K562 (cell line): ENCODE measurements at regions of chr2 and their contacts with region 1.

Region 1: DNA sequence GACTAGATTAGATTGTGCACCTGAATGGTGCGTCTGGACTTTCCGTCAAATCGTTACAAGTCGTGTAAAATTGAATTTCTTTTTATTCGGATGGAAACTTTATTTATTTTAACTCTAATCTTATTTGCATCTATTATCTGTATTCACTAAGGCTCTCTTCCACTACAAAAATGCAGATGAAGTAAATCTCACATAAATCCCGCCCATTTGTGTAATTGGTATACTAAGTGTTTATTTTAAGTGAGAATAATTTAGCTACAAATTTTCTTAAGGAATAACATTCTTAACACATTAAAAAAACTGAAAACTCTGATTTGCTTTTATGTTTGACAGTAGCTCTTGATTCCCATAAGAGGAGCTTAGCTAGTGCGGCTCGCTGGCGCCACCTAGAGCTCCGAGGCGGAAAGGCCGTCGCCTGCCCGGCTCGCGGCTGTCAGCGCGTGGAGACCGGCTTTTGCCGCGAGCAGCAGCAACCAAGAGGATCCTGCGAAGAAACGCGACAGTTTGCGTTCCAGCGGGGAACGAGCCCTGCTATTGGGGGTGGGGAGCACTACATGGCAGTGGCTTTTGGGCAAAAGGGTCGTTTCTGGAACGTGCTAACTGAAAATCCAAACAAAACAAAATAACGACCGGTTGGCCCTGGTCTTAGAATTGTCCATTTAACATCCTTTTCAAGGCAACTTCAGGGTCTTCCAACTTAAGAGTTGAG is 6.7 kb downstream of the SP9 start:
- DNase-seq: peak; percentile 81 to 88 (median 84)
- ATAC-seq: peak; percentile 79
- H3K4me3 ChIP-seq: no peak overlapping the region
- H3K27ac ChIP-seq: no peak overlapping the region
- H3K4me1 ChIP-seq: peaks cover 5 to 44% of the 10 kb centered on the region in 2 experiments; a peak in 3 of 5 replicates
- H3K27me3 ChIP-seq: peaks cover 0 to 18% of the 10 kb centered on the region in 2 experiments; a peak in 3 of 5 replicates
- CTCF ChIP-seq: peak; percentile 96 to 99 (median 97)
- EP300 ChIP-seq: no peak
- POLR2A ChIP-seq: no peak
- RAD21 ChIP-seq: peak; percentile 98 to 99

Region 2: GRCh38 chr2:173027181-173028128 is 1314.0 kb before region 1 on chr2:
- CTCF ChIA-PET with region 1: interaction called, 4 read pairs
- POLR2A ChIA-PET with region 1: no interaction called
- in situ Hi-C with region 1: no loop called
- intact Hi-C with region 1: loop called (anchors 10 kb)
- DNase-seq: peak; percentile 76 to 91 (median 82)
- ATAC-seq: peak; percentile 90
- H3K4me3 ChIP-seq: no peak overlapping the region
- H3K27ac ChIP-seq: no peak overlapping the region
- H3K4me1 ChIP-seq: no peaks in the 10 kb centered on the region
- H3K27me3 ChIP-seq: peaks cover 39 to 42% of the 10 kb centered on the region in 2 experiments
- CTCF ChIP-seq: peak; percentile 83 to 97 (median 95)
- EP300 ChIP-seq: no peak; the same call in 1 of the 2 replicates
- POLR2A ChIP-seq: no peak
- RAD21 ChIP-seq: peak; percentile 95 to 97

Region 3: DNA sequence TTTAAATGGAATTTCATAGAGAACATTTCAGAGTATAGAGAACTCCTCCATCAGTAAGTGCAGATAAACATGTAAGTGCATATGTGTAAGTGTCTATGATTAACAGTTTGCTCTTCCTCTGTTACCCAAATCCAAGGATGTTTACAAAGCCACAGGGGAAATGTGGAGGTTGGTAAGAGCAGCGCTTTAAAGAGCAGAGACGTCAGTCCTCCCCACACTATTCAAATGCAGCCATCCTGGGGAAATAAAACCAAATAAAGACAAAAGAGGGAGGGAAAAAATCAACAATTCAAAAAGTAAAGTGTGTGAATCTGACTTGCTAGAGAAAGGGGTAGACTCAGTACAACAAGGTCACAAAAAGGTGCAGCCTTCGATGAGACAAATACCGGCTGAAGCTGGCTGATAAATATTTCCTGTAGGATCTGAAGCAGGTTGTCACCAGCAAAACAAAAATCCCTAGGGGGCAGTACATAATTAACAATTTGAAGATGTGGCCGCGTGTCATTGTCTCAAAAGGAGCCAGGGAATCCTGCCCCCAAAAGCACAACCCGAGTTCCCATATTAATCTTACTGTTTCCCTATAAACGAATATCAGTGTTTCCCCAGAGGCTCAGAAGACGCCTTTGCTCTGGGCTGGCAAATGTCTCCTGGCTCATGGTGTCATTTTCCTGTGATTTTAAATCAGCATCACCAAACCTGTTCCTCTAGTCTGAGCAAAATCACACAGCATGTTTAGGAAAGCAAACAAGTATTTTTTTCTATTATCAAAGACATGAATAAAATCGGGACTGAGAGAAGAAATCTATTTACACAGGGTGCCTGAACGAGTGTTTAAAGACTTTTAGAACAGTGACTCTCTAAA is 770.2 kb before region 1 on chr2:
- CTCF ChIA-PET with region 1: interaction called, 3 read pairs
- POLR2A ChIA-PET with region 1: no interaction called
- in situ Hi-C with region 1: loop called (anchors 10 kb)
- intact Hi-C with region 1: loop called (anchors 2 kb)
- DNase-seq: peak in 2 of 4 experiments; percentile 34 to 36
- ATAC-seq: peak; percentile 76
- H3K4me3 ChIP-seq: no peak overlapping the region
- H3K27ac ChIP-seq: no peak overlapping the region
- H3K4me1 ChIP-seq: no peaks in the 10 kb centered on the region
- H3K27me3 ChIP-seq: 0 out of 5 replicates have a peak, but pooled peaks cover 0 to under 1% of the 10 kb centered on the region in 2 experiments
- CTCF ChIP-seq: peak; percentile 36 to 64 (median 40); a peak in 5 of 6 replicates
- EP300 ChIP-seq: no peak
- POLR2A ChIP-seq: no peak
- RAD21 ChIP-seq: peak; percentile 50 to 64

Region 4: DNA sequence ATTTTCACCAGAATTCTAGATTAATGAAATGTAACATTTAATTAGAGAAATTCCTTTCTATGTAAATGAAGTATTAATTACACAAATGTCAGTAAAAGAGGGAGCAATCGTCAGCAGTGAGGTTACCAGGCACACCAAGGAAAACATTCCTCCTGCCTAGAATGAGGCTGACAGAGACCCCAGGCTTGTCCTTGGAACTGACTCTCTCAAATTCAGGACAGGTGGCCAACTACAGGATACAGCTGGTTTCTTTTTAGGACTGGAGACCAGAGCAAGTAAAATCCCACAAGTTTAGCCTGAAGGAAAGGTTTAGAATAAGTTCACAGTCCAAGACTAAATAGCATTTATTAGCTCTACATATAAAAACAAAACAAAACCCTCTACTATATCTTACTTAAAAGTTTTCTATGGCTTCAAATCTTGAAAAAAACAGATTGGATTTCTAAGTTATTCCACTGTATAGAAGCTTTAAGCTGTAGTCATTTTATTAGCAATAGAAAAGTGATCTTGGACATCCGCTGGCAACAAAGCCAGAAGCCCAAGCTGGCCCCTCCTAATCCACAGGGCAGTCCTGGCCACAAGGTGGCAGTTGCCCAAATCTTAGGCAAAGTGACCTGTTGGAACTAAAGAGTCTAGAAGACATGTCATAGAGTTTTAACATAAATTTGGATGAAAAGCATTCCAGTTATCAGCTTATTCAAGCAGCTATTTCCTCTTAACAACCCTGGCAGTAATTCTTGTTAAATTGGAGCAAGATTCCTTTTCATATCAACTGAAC is 457.2 kb before region 1 on chr2:
- CTCF ChIA-PET with region 1: no interaction called
- POLR2A ChIA-PET with region 1: no interaction called
- in situ Hi-C with region 1: no loop called
- intact Hi-C with region 1: loop called (anchors 5 kb)
- DNase-seq: peak; percentile 51 to 74 (median 62)
- ATAC-seq: peak; percentile 97
- H3K4me3 ChIP-seq: no peak overlapping the region
- H3K27ac ChIP-seq: no peak overlapping the region
- H3K4me1 ChIP-seq: no peaks in the 10 kb centered on the region
- H3K27me3 ChIP-seq: peaks cover 13 to 27% of the 10 kb centered on the region in 2 experiments; a peak in 4 of 5 replicates
- CTCF ChIP-seq: peak; percentile 77 to 85 (median 83)
- EP300 ChIP-seq: no peak
- POLR2A ChIP-seq: no peak
- RAD21 ChIP-seq: peak; percentile 56 to 78

Region 5: DNA sequence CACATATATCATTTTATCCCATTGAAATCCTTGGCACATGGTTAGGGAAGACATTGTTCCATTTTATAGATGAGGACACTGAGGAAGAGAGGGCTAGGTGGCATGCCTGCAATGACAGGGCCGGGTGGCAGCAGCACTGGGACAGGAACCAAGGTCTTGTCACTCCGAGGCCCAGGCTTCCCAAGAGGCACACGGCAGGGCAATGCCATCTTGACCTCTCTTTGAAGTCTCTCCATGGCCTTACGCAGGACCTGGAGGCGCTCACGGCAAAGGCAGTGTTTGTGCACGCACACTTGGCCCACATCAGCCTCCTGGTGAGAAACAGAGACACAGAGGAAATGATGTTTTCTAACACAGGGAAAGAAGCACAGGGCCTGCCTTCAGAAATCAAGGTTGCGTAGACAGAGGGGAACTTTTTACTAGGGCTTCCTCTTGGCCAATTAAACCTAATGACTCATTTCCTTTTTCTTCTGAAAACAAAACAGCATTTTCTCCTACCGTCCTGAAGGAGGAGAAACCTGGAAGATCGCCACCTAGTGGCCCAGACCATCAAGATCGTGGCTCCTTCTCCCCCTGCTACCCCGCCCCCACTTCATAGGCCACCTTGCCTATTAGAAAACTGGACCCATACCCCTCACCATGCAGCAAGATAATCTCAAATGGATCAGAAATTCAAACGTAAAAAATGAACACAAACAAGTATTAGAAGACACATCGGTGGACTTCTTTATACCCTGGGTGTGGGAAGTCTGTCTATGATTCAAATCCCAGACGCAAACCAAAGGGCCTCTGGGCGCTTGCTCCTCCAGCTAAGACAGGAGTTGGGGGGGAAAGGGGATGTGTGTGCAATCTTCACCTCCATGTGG is 301.7 kb before region 1 on chr2:
- CTCF ChIA-PET with region 1: no interaction called
- POLR2A ChIA-PET with region 1: no interaction called
- in situ Hi-C with region 1: loop called (anchors 10 kb)
- intact Hi-C with region 1: no loop called
- DNase-seq: peak; percentile 88 to 95 (median 89)
- ATAC-seq: peak; percentile 93
- H3K4me3 ChIP-seq: no peak overlapping the region
- H3K27ac ChIP-seq: peak overlapping the region; percentile 76
- H3K4me1 ChIP-seq: peaks cover 3 to 10% of the 10 kb centered on the region in 2 experiments; a peak in 4 of 5 replicates
- H3K27me3 ChIP-seq: no peaks in the 10 kb centered on the region; a peak in 2 of 5 replicates
- CTCF ChIP-seq: peak; percentile 96 to 97 (median 97)
- EP300 ChIP-seq: peak; percentile 63
- POLR2A ChIP-seq: no peak
- RAD21 ChIP-seq: peak; percentile 79 to 84

Region 6: GRCh38 chr2:174138161-174138560 is 203.3 kb before region 1 on chr2:
- CTCF ChIA-PET with region 1: no interaction called
- POLR2A ChIA-PET with region 1: interaction called, 3 read pairs
- in situ Hi-C with region 1: no loop called
- intact Hi-C with region 1: loop called (anchors 5 kb)
- DNase-seq: peak in 3 of 4 experiments; percentile 24 to 41 (median 41)
- ATAC-seq: peak; percentile 82
- H3K4me3 ChIP-seq: no peak overlapping the region
- H3K27ac ChIP-seq: no peak overlapping the region
- H3K4me1 ChIP-seq: no peaks in the 10 kb centered on the region
- H3K27me3 ChIP-seq: no peaks in the 10 kb centered on the region
- CTCF ChIP-seq: peak; percentile 38 to 52 (median 42); a peak in 5 of 6 replicates
- EP300 ChIP-seq: no peak
- POLR2A ChIP-seq: no peak
- RAD21 ChIP-seq: peak in 1 of 2 experiments; percentile 54; a peak in 2 of 4 replicates

Region 7: GRCh38 chr2:174148833-174149232 is 192.6 kb before region 1 on chr2:
- CTCF ChIA-PET with region 1: no interaction called
- POLR2A ChIA-PET with region 1: no interaction called
- in situ Hi-C with region 1: no loop called
- intact Hi-C with region 1: no loop called
- DNase-seq: no peak
- ATAC-seq: no peak
- H3K4me3 ChIP-seq: no peak overlapping the region
- H3K27ac ChIP-seq: no peak overlapping the region
- H3K4me1 ChIP-seq: peaks cover 2 to 7% of the 10 kb centered on the region in 2 experiments; a peak in 4 of 5 replicates
- H3K27me3 ChIP-seq: no peaks in the 10 kb centered on the region
- CTCF ChIP-seq: no peak
- EP300 ChIP-seq: no peak
- POLR2A ChIP-seq: no peak
- RAD21 ChIP-seq: no peak

Region 8: DNA sequence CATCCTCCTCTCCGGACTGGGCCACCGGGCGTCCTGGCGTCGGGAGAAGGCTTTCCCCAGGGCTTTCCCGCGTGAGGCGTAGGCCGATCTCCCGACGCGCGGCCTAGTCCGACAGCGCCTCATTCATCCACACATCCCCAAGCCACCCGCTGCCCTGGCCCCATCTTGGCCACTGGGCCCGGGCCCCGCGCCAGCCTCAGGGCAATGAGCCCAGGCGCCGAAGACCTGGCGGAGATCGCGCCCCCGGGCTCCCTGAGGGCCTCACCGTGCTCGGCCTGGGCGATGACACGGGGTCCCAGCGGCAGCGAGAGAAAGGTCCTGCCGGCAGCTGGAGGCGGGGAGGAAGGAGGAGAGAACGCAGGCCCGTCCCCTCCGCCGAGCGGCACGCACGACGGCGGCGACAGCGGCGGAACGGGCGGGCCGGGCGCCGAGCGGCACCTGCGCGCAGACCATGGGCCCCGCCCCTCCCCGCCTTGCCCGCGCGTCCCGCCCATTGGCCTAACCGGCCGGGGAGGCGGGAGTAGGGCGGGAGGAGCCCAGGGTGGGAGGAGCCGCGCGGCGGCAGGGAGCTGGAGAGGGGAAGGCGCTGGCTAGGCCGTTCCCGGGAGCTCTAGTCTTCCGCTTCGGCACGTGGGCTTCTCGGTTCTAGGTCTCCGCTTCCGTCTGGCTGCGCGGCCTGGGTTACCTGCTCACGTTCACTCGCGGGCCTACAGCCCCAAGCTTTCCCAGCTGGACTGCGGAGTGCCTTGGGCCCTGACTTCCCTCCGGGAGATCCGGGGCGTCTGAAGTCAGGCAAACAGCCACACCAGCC is 93.0 kb before region 1 on chr2 and contains the start of gene OLA1:
- CTCF ChIA-PET with region 1: no interaction called
- POLR2A ChIA-PET with region 1: no interaction called
- in situ Hi-C with region 1: no loop called
- intact Hi-C with region 1: loop called (anchors 5 kb)
- DNase-seq: peak; percentile 98 to 99 (median 99)
- ATAC-seq: peak; percentile 96
- H3K4me3 ChIP-seq: peak within 1 kb of the TSS; percentile 87
- H3K27ac ChIP-seq: peak within 1 kb of the TSS; percentile 90
- H3K4me1 ChIP-seq: peaks cover 5 to 14% of the 10 kb centered on the region in 2 experiments; a peak in 4 of 5 replicates
- H3K27me3 ChIP-seq: no peaks in the 10 kb centered on the region
- CTCF ChIP-seq: no peak
- EP300 ChIP-seq: no peak; the same call in 1 of the 2 replicates
- POLR2A ChIP-seq: peak; percentile 98
- RAD21 ChIP-seq: no peak
- polyA plus RNA-seq, gene OLA1: 208 to 222 TPM